Breast epithelium (tissue), 4 donors: ENCODE measurements at regions of chr12 and their contacts with region 1.

Region 1: DNA sequence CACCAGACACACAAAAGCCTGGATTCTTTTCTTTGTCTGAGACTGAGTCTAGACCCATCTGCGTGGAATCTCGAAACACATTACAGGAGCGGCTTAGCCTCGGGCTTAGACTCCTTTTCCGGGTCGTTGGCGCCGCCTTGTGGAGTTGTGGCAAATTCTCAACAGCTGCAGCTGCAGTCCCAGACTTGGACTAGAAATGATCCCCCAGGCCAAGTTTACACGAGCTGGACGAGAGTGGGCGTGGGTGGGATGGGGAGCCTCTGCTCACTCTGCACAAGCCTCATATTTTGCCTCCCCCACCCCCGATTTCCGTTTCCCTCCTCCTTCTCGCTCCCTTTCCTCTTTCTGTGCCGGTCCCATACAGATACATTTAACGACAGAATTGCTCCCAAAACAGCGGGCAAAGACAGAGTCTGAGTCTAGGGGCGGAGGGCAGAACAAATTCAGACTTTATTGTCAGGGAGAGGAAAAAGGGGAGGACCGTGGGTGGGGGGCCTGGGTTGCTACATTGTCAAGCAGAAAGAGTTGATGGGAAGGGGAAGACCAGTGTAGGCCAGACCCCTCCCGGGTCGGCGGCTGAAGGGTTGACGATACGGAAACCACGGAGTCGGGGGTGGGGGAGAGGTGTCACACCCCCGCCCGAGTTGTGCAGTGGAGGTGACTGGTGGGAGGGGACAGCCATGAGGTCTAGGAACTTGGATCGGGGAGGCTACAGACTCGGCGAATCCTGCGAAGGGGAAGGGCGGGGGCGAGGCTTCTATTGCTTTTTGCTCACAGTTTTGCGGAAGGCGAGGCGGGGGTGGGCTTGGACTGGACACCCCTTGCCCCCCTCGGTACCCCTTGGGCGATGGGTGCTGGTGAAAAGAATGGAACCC is 4.7 kb upstream of the GPR84 start:
- DNase-seq: peak; percentile 82 to 93
- H3K4me3 ChIP-seq: peak overlapping the region; percentile 37 to 55 (median 44)
- H3K27ac ChIP-seq: peak overlapping the region; percentile 71 to 77
- H3K4me1 ChIP-seq: peaks cover 0 to 8% of the 10 kb centered on the region in 2 donors
- H3K27me3 ChIP-seq: no peaks in the 10 kb centered on the region
- CTCF ChIP-seq: peak; percentile 82 to 89 (median 88)
- POLR2A ChIP-seq: no peak

Region 2: DNA sequence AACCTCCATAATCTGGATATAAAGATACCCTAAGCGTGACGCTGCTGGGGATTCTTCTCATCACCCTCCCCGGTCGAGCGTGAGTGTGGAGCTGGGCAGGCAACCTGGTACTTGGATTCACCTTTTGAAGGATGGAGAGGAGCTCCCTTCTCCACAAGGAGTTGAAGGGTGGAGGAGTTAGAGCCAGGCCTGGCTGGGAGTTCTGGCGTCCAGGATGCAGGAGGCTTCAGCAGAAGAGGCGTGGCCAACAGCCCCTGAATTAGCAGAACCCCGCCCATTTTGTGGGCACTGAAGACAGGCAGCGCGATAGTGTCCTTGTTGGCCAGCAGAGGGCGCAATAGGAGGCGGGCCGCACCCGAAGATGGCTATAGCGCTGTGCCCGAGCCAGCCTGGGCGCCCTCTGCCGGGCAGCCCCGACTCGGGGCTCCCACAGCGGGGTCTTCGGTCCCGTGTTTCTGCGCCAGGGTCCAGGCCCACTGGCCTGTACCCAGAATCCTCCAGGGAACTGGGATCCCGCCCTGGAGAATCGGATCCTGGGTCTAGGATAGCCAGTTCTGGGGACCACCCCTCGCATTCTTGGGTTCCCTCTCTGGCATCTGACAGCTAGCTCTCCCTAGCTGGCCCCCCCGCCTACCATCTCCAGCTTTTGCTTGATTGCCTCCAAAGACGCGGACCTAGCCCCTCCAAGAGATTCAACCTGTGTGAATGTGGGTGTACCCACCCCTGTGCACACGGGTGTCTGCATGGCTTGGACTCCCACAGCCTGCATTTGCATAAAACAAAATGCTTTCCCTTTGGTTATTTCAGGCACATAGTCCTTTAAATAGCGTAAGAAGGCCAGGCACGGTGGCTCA is 154.2 kb before region 1 on chr12:
- intact Hi-C with region 1: loop called (anchors 10 kb)
- DNase-seq: peak; percentile 66 to 88
- H3K4me3 ChIP-seq: peak overlapping the region; percentile 7 to 29 (median 24)
- H3K27ac ChIP-seq: no peak overlapping the region
- H3K4me1 ChIP-seq: peaks cover 0 to 11% of the 10 kb centered on the region in 2 donors
- H3K27me3 ChIP-seq: peaks cover 0 to 9% of the 10 kb centered on the region in 2 donors
- CTCF ChIP-seq: peak; percentile 75 to 91 (median 90)
- POLR2A ChIP-seq: no peak

Region 3: GRCh38 chr12:54279866-54280467 is 89.0 kb before region 1 on chr12 and contains the start of gene CBX5:
- intact Hi-C with region 1: loop called (anchors 10 kb)
- DNase-seq: peak; percentile 98 to 100
- H3K4me3 ChIP-seq: peak within 1 kb of the TSS; percentile 76 to 79 (median 76)
- H3K27ac ChIP-seq: peak within 1 kb of the TSS; percentile 93 to 96
- H3K4me1 ChIP-seq: peaks cover 3 to 36% of the 10 kb centered on the region in 2 donors
- H3K27me3 ChIP-seq: no peaks in the 10 kb centered on the region
- CTCF ChIP-seq: no peak
- POLR2A ChIP-seq: peak; percentile 62
- total RNA-seq, gene CBX5: 22.4 to 45.8 (median 31.8) TPM

Region 4: GRCh38 chr12:54535474-54535873 is 166.5 kb after region 1 on chr12:
- intact Hi-C with region 1: no loop called
- DNase-seq: no peak
- H3K4me3 ChIP-seq: no peak overlapping the region
- H3K27ac ChIP-seq: no peak overlapping the region
- H3K4me1 ChIP-seq: no peaks in the 10 kb centered on the region
- H3K27me3 ChIP-seq: no peaks in the 10 kb centered on the region
- CTCF ChIP-seq: no peak
- POLR2A ChIP-seq: no peak

Region 5: DNA sequence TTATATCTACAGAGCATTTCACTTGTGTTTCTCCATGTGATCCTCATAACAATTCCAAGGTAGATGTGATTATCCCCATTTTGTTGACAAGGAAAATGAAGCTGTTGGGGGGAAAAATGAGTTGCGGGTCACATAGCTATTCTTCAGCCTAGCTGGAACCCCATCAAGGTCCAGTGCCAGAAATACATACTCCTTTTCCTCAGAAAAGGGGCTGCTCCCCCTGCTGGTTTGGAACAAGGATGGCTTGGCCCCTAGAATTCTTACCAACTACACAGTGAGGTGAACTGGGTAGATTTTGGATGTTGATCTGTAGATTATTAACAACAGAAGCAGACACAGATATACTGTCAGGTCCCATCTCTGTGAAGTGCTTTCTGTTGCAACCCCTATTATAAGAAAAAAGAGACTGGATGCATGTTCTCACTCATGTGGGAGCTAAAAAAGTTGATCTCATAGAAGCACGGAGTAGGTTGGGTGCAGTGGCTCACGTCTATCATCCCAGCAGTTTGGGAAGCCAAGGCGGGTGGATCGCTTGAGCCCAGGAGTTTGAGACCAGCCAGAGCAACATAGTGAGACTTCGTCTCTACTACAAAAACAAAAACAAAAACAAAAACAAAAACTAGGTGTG is 1660.8 kb after region 1 on chr12:
- intact Hi-C with region 1: no loop called
- DNase-seq: no peak
- H3K4me3 ChIP-seq: no peak overlapping the region
- H3K27ac ChIP-seq: peak overlapping the region in 1 of 2 donors; percentile 61
- H3K4me1 ChIP-seq: no peaks in the 10 kb centered on the region
- H3K27me3 ChIP-seq: no peaks in the 10 kb centered on the region
- CTCF ChIP-seq: peak; percentile 49 to 61 (median 60)
- POLR2A ChIP-seq: no peak